ENCODE measurements at regions of chr20 and their contacts with region 1.

Region 1: DNA sequence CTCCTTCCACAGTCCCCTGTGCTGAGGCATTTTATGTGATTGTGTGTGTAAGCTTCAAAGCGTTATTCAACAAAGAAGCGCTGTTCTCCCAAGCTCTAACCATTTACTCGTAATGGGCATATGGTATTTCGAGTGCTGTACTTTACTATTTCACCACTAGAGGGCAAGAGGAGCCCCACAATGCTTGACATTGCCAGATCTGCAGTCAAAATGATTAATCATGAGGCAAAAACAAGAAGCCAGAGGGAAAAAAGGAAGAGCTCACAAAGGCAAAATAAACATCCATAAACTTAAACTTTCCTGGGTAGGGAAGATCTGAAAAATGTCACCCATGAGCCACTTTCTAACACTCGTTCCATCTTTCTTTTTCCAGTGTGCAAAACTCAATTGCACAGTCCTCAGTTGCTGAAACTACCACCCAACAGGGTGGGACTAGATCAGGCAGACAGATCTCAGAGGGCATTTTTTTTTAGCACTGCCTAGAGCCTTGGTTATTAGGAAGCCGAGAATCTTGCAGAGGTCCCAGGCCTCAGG is 215.0 kb upstream of the PLCB4 start:
- H3K4me3 ChIP-seq: no peak overlapping the region
- H3K27ac ChIP-seq: no peak overlapping the region
- H3K4me1 ChIP-seq: peaks cover 3% of the 10 kb centered on the region; the same call in 1 of the 2 replicates
- CTCF ChIP-seq: no peak

Region 2: GRCh38 chr20:8361006-8361652 is 492.7 kb before region 1 on chr20:
- CTCF ChIA-PET with region 1: no interaction called
- POLR2A ChIA-PET with region 1: no interaction called
- H3K4me3 ChIP-seq: no peak overlapping the region
- H3K27ac ChIP-seq: no peak overlapping the region
- H3K4me1 ChIP-seq: no peaks in the 10 kb centered on the region; the same call in 1 of the 2 replicates
- CTCF ChIP-seq: no peak

Region 3: DNA sequence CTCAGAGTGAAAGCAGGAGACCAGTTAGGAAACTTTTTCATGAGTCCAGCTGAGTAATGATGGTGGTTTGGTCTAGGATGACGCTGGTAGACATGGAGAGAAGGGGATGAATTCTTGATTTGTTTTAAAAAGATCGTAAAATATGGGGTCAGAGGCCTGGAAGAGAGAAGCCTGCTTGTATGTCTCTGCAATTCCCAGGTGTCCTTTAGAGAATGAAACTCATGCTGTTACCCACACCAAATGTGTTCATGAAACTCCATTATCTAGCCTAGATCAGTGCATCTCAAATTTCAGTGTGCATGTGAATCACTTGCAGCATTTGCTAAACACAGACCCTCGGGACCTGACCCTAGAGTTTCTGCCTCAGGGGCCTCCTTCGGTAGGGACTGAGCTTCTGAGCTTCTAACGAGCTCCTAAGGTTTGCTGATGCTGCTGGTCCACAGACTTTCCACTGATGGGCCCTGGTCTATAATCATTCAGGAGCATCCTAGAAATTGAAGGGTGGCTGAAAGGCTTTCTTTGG is 86.9 kb before region 1 on chr20:
- CTCF ChIA-PET with region 1: no interaction called
- POLR2A ChIA-PET with region 1: no interaction called
- H3K4me3 ChIP-seq: no peak overlapping the region
- H3K27ac ChIP-seq: no peak overlapping the region
- H3K4me1 ChIP-seq: no peaks in the 10 kb centered on the region; the same call in 1 of the 2 replicates
- CTCF ChIP-seq: no peak

Region 4: DNA sequence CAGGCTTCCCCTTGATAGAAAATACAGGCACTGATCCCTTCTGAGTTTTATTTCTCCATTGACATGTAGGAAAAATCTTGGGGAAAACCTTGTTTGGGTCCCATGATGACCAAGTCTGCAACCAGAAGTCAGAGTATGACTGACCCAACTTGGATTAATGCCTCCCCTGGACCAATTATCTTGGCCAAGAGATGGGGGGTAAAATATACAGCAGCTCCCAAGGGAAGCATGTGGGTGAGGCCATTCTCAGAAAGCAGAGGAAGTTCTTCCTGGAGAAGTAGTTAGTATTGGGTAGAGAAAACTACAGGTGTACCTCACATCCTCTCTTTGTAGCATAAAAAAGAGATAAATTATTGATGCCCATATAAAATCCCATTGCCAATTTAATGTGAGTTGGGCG is 70.1 kb before region 1 on chr20:
- CTCF ChIA-PET with region 1: no interaction called
- POLR2A ChIA-PET with region 1: no interaction called
- H3K4me3 ChIP-seq: no peak overlapping the region
- H3K27ac ChIP-seq: no peak overlapping the region
- H3K4me1 ChIP-seq: no peaks in the 10 kb centered on the region
- CTCF ChIP-seq: no peak

Region 5: DNA sequence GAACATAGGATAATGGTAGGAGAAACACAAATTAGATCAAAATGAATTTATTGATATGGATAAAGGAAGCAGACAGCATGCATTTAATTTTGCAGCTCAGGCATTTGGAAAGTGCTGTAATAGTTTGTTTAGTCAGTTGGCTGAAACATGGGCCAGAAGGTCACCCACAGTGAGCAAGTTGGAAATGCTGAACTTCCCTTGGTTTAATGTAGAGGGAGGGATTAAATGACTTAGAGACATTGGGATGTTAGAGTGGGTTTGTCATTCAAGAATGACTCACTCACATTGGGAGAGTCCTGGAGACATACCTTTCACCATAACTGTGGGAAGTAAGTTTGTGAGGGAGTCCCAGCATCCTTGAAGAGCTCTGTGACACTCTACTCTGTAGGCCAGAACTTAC is 16.5 kb before region 1 on chr20:
- CTCF ChIA-PET with region 1: interaction called, 11 read pairs
- POLR2A ChIA-PET with region 1: no interaction called
- H3K4me3 ChIP-seq: no peak overlapping the region
- H3K27ac ChIP-seq: no peak overlapping the region
- H3K4me1 ChIP-seq: no peaks in the 10 kb centered on the region
- CTCF ChIP-seq: no peak

Region 6: DNA sequence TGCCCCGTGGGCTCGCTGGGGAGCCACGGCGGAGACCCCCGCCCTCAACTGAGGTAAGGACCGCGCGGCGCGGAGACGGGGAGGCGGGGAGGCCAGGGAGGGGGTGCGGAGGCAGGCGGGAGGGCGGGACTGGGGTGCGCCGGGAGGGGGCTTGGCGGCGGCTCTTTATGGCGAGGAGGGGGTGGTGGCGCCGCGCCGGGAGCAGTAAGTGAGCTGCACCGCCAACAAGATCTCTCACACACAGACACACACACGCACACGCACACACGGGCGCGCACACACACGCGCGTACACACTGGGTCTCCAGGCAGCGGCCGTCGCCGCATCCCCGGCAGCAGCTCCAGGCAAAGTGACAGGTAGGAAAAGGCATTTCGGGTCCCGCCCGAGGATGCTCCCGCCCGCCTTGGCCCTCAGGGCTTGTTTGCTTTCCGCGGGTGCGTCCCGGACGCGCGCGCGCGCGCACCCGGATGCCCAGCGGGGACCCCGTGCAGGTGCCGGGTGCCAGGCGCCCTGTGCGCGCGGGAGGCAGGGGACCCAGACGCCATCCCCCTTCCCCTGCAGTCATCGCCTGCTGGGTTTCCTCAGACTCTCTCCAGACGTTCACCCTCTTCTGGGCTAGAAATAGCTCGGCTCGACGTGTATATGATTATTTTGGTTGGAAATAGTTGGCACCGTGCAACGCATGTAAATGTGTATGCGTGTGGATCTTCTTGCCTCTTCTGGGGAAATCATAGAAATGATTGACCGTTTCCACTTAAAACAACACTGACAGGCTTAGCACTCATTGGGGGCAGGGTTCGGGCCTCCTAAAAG is 215.2 kb after region 1 on chr20 and contains the start of gene PLCB4:
- CTCF ChIA-PET with region 1: interaction called, 10 read pairs
- POLR2A ChIA-PET with region 1: no interaction called
- H3K4me3 ChIP-seq: peak within 1 kb of the TSS; percentile 76
- H3K27ac ChIP-seq: peak within 1 kb of the TSS; percentile 90
- H3K4me1 ChIP-seq: peaks cover 22% of the 10 kb centered on the region
- CTCF ChIP-seq: 0 out of 2 replicates have a peak, but pooled peaks have one; percentile 15

Region 7: DNA sequence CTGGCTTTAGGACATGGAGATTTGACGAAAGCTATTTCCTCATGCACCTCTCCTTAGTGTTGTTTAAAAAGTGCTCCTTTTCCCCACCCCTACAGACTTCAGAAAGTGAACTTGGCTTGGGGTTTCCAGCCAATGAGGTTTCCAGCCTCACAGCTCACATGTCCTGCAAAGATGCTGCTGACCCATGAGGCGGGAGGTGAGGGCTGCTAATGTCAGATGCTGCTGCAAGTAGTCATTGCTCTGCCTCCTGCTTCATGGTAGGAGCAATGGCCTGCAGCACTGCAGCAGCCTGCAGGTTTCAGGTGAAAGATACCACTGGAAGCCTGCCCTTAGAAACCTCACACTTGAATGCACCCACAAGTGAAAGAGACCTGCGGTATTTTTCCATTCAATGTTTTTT is 773.3 kb after region 1 on chr20:
- CTCF ChIA-PET with region 1: no interaction called
- POLR2A ChIA-PET with region 1: no interaction called
- H3K4me3 ChIP-seq: no peak overlapping the region
- H3K27ac ChIP-seq: no peak overlapping the region
- H3K4me1 ChIP-seq: no peaks in the 10 kb centered on the region
- CTCF ChIP-seq: no peak

Measured in HEK293 (cell line).